ENCODE measurements at regions of chr9 and their contacts with region 1.

Region 1: GRCh38 chr9:976258-976942 is at the start of gene DMRT3:
- DNase-seq: peak in 1 of 2 experiments; percentile 83
- H3K4me3 ChIP-seq: peak within 1 kb of the TSS; percentile 33 to 63 (median 40)
- H3K27ac ChIP-seq: no peak within 1 kb of the TSS
- H3K4me1 ChIP-seq: peaks cover 13 to 36% (median 23%) of the 10 kb centered on the region in 4 experiments
- H3K27me3 ChIP-seq: peaks cover 77 to 96% (median 92%) of the 10 kb centered on the region in 4 experiments
- CTCF ChIP-seq: peak in 1 of 3 experiments; percentile 22; a peak in 1 of 4 replicates
- EP300 ChIP-seq: no peak
- POLR2A ChIP-seq: no peak
- RAD21 ChIP-seq: no peak; a peak in 1 of 4 replicates
- total RNA-seq, gene DMRT3: not detected in 2 replicates

Region 2: GRCh38 chr9:994005-994404 is 17.6 kb after region 1 on chr9:
- CTCF ChIA-PET with region 1: interaction called, 10 read pairs
- POLR2A ChIA-PET with region 1: no interaction called
- DNase-seq: no peak
- H3K4me3 ChIP-seq: no peak overlapping the region
- H3K27ac ChIP-seq: no peak overlapping the region
- H3K4me1 ChIP-seq: no peaks in the 10 kb centered on the region
- H3K27me3 ChIP-seq: no peaks in the 10 kb centered on the region
- CTCF ChIP-seq: no peak
- EP300 ChIP-seq: no peak
- POLR2A ChIP-seq: no peak
- RAD21 ChIP-seq: no peak

Region 3: GRCh38 chr9:1001838-1002237 is 25.4 kb after region 1 on chr9:
- CTCF ChIA-PET with region 1: interaction called, 10 read pairs
- POLR2A ChIA-PET with region 1: no interaction called
- DNase-seq: no peak
- H3K4me3 ChIP-seq: no peak overlapping the region
- H3K27ac ChIP-seq: no peak overlapping the region
- H3K4me1 ChIP-seq: no peaks in the 10 kb centered on the region
- H3K27me3 ChIP-seq: no peaks in the 10 kb centered on the region
- CTCF ChIP-seq: no peak
- EP300 ChIP-seq: no peak
- POLR2A ChIP-seq: no peak
- RAD21 ChIP-seq: no peak